A673 (cell line): ENCODE measurements at regions of chrX and their contacts with region 1.

Region 1: DNA sequence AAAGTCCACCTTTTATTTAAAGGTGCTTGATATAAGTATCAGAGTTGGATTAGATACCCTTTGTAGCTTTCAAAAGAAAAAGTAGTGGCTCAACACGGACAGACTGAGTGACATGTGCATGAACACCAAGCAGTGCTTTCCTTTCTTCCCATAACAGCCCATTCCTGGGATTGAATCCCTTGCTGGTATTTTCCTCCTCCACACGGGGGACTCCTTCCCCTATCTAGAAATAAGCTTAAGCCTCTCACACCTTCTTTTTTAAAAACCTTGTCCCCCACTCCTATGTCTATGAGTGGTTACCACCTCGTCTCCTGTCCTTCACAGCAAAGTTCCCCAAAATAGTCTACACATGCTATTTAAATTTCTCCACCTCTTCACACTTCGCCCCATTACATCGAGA is 5.1 kb downstream of the AP1S2 start:
- DNase-seq: peak; percentile 59
- H3K4me3 ChIP-seq: no peak overlapping the region
- H3K27ac ChIP-seq: peak overlapping the region; percentile 26
- H3K4me1 ChIP-seq: peaks cover 17% of the 10 kb centered on the region
- H3K27me3 ChIP-seq: no peaks in the 10 kb centered on the region
- CTCF ChIP-seq: peak; percentile 56

Region 2: GRCh38 chrX:15606136-15606535 is 243.4 kb before region 1 on chrX:
- CTCF ChIA-PET with region 1: no interaction called
- POLR2A ChIA-PET with region 1: no interaction called
- intact Hi-C with region 1: no loop called
- DNase-seq: no peak
- H3K4me3 ChIP-seq: no peak overlapping the region
- H3K27ac ChIP-seq: no peak overlapping the region
- H3K4me1 ChIP-seq: no peaks in the 10 kb centered on the region
- H3K27me3 ChIP-seq: peaks cover 37% of the 10 kb centered on the region
- CTCF ChIP-seq: no peak

Region 3: GRCh38 chrX:15724911-15725310 is 124.6 kb before region 1 on chrX:
- CTCF ChIA-PET with region 1: no interaction called
- POLR2A ChIA-PET with region 1: no interaction called
- intact Hi-C with region 1: no loop called
- DNase-seq: no peak
- H3K4me3 ChIP-seq: no peak overlapping the region
- H3K27ac ChIP-seq: no peak overlapping the region
- H3K4me1 ChIP-seq: no peaks in the 10 kb centered on the region
- H3K27me3 ChIP-seq: no peaks in the 10 kb centered on the region
- CTCF ChIP-seq: no peak

Region 4: DNA sequence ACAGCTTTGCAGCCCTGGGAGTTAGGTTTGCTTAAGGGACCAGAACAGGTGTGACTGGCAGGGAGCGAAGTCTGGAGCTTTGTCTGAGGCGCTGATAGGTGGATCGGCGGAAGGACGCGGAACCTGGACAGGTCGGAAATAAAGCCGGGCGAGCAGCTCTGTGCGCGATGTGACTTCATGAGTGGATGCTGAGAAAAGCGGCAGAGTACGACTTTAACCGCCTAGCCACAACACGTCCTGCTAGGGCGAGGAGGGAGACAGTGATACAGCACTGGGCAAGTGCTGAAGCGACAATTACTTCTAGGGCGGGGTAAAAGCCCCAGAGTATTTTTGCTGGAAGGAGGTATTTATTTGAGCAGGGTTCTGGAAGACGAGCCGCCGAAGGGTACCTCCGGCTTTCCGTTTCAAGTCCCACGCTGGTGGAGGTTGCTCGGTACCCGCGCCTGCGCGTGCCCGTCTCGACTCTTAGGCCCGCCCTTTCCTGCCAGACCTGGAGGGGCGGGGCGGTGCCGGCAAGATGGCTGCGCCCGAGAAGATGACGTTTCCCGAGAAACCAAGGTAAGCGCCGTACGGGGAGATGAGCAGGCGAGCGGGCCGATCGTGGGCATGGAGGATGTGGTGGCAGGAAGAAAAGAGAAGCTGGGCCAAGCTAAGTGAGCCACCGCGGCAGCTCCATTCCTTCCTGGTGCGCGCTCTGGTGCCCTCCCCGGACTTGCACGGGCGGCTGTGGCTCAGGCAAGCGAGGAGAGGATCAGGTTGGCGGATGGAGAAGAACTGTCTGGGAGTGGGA is 59.4 kb before region 1 on chrX and contains the start of gene ZRSR2:
- CTCF ChIA-PET with region 1: no interaction called
- POLR2A ChIA-PET with region 1: no interaction called
- intact Hi-C with region 1: no loop called
- DNase-seq: peak; percentile 93
- H3K4me3 ChIP-seq: peak within 1 kb of the TSS; percentile 87
- H3K27ac ChIP-seq: peak within 1 kb of the TSS; percentile 51
- H3K4me1 ChIP-seq: peaks cover 7% of the 10 kb centered on the region
- H3K27me3 ChIP-seq: no peaks in the 10 kb centered on the region
- CTCF ChIP-seq: no peak
- total RNA-seq, gene ZRSR2: 16.1 and 18.1 TPM in 2 replicates

Region 5: DNA sequence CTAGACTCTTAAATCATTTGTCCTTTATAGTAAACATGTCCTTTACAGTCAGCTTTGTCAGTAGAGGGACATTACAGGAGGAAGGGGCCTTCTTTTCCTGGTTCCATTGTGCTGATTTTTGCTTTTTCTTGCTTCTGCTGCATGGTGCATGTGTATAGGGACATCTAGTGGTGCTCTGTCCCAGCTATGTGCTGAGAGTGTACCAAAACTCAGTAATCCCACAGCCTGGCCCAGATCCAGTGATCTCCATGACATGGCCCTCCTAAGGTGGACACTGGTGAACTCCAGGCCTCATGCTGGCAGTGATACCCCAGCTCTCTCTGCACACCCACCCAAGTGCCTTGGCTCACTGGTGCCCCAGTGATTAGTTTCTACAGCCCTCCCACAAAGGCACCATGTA is 362.9 kb after region 1 on chrX:
- CTCF ChIA-PET with region 1: interaction called, 3 read pairs
- POLR2A ChIA-PET with region 1: no interaction called
- intact Hi-C with region 1: loop called (anchors 1 kb)
- DNase-seq: peak; percentile 57
- H3K4me3 ChIP-seq: no peak overlapping the region
- H3K27ac ChIP-seq: no peak overlapping the region
- H3K4me1 ChIP-seq: no peaks in the 10 kb centered on the region
- H3K27me3 ChIP-seq: no peaks in the 10 kb centered on the region
- CTCF ChIP-seq: peak; percentile 64

Region 6: GRCh38 chrX:16368696-16369095 is 519.1 kb after region 1 on chrX:
- CTCF ChIA-PET with region 1: no interaction called
- POLR2A ChIA-PET with region 1: no interaction called
- intact Hi-C with region 1: no loop called
- DNase-seq: no peak
- H3K4me3 ChIP-seq: no peak overlapping the region
- H3K27ac ChIP-seq: no peak overlapping the region
- H3K4me1 ChIP-seq: no peaks in the 10 kb centered on the region
- H3K27me3 ChIP-seq: peaks cover 4% of the 10 kb centered on the region
- CTCF ChIP-seq: no peak

Region 7: DNA sequence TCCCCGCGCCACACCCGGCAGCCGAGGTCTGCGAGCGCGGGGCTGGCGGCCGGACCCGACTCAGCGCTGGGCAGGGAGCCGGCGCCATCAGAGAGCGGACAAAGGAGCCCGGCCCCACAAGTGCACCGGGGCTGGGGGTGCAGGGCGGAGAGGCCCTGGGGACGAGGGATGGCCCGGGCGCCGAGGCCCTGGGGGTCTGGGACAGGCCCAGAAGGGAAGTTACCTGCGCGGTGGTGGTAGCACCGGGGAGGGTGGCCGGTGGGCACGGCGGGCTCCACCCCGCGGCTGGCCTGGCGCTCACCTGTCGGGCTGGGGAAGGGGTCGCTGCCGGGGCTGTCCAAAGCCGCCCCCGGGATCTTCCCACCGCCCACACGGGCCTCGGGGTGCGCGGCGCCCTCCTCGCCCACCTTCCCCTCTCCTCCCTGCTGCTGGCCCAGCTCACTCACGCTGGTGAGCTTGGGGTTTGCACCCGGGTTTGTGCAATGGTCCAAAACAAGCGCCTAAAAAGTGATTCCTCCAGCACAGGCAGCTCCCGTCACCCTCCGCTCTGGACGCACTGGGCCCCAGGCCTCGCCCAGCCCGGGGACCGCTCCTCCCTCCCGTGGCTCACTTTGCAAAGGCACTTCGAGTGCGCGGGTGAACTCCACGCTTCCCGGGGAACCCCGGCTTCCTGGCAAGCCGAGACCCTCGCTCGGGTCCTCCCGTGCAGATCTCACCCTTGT is 862.7 kb after region 1 on chrX and contains the start of gene CTPS2:
- CTCF ChIA-PET with region 1: interaction called, 11 read pairs
- POLR2A ChIA-PET with region 1: no interaction called
- intact Hi-C with region 1: no loop called
- DNase-seq: peak; percentile 78
- H3K4me3 ChIP-seq: peak within 1 kb of the TSS; percentile 67
- H3K27ac ChIP-seq: peak within 1 kb of the TSS; percentile 87
- H3K4me1 ChIP-seq: no peaks in the 10 kb centered on the region
- H3K27me3 ChIP-seq: peaks cover 21% of the 10 kb centered on the region
- CTCF ChIP-seq: no peak
- total RNA-seq, gene CTPS2: 15.6 and 20.5 TPM in 2 replicates